Common myeloid progenitor, CD34-positive (primary cell): ENCODE measurements at regions of chr17 and their contacts with region 1.

Region 1: DNA sequence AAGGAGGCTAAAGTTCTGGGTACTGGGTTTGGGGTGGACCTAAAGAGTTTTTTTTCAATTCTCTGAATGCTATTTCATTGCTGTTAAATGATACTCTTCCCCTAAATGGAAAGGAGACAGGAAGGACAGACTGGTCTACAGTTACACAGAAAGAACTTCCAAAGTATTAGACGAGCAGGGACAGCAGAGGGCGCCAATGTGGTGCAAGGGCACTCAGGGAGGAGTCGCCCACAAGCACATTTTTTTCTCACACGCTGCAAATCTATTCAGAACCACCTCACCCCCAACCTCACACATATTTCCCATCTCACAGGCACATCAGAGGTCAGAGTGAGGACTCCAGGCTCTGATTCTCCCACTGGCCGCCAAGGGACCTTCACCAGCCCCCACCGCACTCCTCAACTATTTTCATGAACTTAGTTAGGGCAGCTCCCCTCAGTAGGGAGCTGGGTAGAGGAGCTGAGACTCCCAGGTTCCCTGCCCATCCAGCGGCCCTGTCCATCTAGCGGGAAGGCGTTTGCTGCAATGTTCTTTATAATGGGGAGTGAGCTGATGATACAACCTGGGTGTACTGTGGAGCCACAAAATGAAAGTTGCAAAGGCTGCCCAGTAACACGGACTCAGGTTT is 6.8 kb upstream of the CA4 start:
- DNase-seq: peak; percentile 79 to 88 (median 86)
- H3K4me3 ChIP-seq: peak overlapping the region in 4 of 7 experiments; percentile 2 to 31 (median 9)
- H3K27ac ChIP-seq: no peak overlapping the region
- H3K4me1 ChIP-seq: peaks cover 0 to 37% (median 30%) of the 10 kb centered on the region in 4 experiments
- H3K27me3 ChIP-seq: peaks cover 0 to 94% (median 37%) of the 10 kb centered on the region in 5 experiments

Region 2: DNA sequence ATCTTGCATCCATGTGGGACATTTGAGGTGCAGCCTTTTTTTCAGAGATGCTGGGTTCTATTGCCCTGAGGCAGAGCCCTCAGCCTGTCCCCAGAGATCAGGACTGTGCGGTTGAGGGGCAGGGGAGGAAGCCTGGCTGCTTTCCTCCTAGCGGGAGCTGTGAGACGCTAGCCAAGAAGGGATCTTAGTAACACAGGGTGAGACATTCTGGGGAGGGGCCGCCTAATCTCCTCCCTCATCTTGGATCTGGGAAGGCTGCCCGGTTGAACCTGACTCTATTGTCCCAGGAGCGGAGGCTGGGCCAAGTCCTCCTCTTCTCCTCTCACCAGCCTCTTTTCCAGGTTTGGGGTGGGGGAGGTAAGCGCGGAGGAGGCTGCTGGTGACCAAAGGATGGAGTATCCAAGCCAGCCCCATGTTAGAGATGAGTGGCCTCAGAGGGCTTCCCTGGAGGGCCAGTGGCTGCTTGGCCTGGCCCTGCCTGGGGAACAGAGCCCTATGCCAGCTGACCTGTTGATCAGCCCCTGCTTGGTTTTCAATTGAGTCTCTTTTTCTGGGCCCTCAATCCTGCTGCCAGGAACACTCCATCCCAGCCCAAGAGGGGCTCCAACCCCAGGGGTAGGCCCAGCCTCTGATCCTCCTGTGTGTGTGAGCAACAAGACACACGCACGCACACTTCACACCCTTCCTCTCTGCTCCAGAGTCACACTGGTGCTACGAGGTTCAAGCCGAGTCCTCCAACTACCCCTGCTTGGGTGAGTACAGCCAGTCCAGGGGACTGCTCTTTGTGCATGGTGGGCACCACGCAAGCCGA is 11.8 kb after region 1 on chr17:
- CTCF ChIA-PET with region 1: interaction called, 25 read pairs
- POLR2A ChIA-PET with region 1: no interaction called
- DNase-seq: no peak
- H3K4me3 ChIP-seq: no peak overlapping the region
- H3K27ac ChIP-seq: no peak overlapping the region
- H3K4me1 ChIP-seq: peaks cover 0 to 14% (median 9%) of the 10 kb centered on the region in 4 experiments
- H3K27me3 ChIP-seq: peaks cover 0 to 35% (median 8%) of the 10 kb centered on the region in 5 experiments

Region 3: DNA sequence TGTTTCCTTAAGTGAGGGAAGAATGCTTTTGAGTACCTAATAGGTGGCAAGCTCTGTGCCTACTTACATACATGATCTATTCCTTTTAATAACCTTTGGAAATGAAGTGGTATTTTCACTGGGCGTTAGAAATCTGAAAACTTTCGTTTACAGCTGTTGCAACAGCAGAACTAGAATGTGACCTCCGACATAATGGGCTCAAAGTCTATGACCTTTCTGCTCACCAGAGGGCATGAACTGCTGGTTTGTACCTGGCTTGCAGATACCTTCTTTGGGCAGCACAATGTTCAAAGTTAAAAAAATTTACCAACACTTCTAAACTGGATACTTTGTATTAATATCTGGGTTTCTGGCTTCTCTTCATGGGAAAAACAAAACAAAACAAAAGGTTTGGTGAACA is 31.0 kb after region 1 on chr17:
- CTCF ChIA-PET with region 1: interaction called, 12 read pairs
- POLR2A ChIA-PET with region 1: no interaction called
- DNase-seq: no peak
- H3K4me3 ChIP-seq: no peak overlapping the region
- H3K27ac ChIP-seq: no peak overlapping the region
- H3K4me1 ChIP-seq: peaks cover 0 to 13% (median 2%) of the 10 kb centered on the region in 4 experiments
- H3K27me3 ChIP-seq: no peaks in the 10 kb centered on the region